Dendritic cell treated with granulocyte-macrophage colony-stimulating factor and Interleukin-4, amounts not matched to agents 40 ng/mL and 50 ng/mL, for 4 days (primary cell): ENCODE measurements at regions of chr14 and their contacts with region 1.

Region 1: DNA sequence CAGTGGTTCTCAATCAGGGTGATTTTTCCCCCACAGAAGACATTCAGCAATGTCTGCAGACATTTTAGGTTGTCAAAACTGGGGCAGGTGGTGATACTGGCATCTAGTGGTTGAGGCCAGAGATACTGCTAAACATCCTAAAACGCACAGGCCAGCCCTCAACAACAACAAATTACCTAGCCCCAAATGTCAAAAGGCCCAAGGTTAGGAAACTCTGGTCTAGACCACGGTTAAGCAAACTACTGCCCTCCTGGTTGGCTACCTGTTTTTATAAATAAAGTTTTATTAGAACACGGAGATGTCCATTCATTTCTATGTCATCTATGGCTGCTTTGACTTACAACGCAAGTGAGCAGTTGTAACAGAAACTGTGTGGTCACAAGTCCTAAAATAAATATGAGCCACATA is 186.7 kb downstream of the EFCAB11 start:
- H3K4me3 Mint-ChIP-seq: no peak overlapping the region
- H3K27ac Mint-ChIP-seq: peak overlapping the region; percentile 47
- H3K4me1 Mint-ChIP-seq: peaks cover 32% of the 10 kb centered on the region
- H3K27me3 Mint-ChIP-seq: peaks cover 6% of the 10 kb centered on the region

Region 2: GRCh38 chr14:89027097-89027740 is 740.6 kb before region 1 on chr14:
- intact Hi-C with region 1: loop called (anchors 5 kb)
- H3K4me3 Mint-ChIP-seq: peak overlapping the region; percentile 67
- H3K27ac Mint-ChIP-seq: no peak overlapping the region
- H3K4me1 Mint-ChIP-seq: peaks cover 21% of the 10 kb centered on the region
- H3K27me3 Mint-ChIP-seq: peaks cover 45% of the 10 kb centered on the region

Region 3: DNA sequence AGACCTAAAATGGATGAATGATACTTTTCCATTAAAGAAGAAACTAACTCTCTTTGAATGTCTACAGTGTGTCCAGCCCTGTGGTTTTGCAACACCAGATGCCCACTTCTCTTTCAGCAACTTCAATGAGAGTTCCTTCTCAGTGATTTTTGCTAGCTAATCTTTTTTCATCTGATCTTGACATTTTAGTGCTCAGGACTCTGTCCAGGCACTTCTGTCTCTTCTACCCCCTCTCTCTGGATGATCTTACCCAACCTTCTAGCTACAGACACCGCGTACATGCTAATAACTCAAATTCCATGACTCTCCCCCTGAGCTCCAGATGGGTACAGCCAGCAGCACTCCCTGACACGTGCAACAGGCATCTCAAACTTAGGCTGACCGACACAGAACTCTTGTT is 189.7 kb before region 1 on chr14:
- intact Hi-C with region 1: no loop called
- H3K4me3 Mint-ChIP-seq: peak overlapping the region; percentile 40
- H3K27ac Mint-ChIP-seq: peak overlapping the region; percentile 84
- H3K4me1 Mint-ChIP-seq: peaks cover 44% of the 10 kb centered on the region
- H3K27me3 Mint-ChIP-seq: no peaks in the 10 kb centered on the region

Region 4: DNA sequence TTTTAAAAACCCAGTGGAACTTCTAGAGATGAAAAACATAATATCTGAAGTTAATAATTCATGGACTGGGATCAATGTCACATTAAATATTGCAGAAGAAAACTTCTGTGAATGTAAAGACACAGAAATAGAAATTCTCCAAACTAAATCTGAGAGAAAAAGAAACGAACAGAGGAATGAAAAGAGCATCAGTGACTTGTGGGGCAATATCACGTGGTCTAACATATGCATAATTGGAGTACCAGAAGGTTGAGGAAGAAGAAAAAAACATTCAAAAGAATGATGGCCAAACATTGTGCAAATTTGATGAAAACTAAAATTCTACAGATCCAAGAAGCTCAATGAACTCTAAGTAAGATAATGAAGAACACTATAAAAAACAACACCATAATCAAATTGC is 55.9 kb after region 1 on chr14:
- intact Hi-C with region 1: no loop called
- H3K4me3 Mint-ChIP-seq: no peak overlapping the region
- H3K27ac Mint-ChIP-seq: no peak overlapping the region
- H3K4me1 Mint-ChIP-seq: peaks cover 14% of the 10 kb centered on the region
- H3K27me3 Mint-ChIP-seq: no peaks in the 10 kb centered on the region

Region 5: GRCh38 chr14:89926717-89927116 is 158.9 kb after region 1 on chr14:
- intact Hi-C with region 1: no loop called
- H3K4me3 Mint-ChIP-seq: no peak overlapping the region
- H3K27ac Mint-ChIP-seq: no peak overlapping the region
- H3K4me1 Mint-ChIP-seq: no peaks in the 10 kb centered on the region
- H3K27me3 Mint-ChIP-seq: no peaks in the 10 kb centered on the region